OCI-LY7 (cell line): ENCODE measurements at regions of chr19 and their contacts with region 1.

Region 1: GRCh38 chr19:29735800-29736199 is 20.7 kb upstream of the C19orf12 start:
- DNase-seq: no peak
- H3K4me3 ChIP-seq: no peak overlapping the region
- H3K27ac ChIP-seq: no peak overlapping the region
- H3K4me1 ChIP-seq: no peaks in the 10 kb centered on the region
- CTCF ChIP-seq: no peak

Region 2: DNA sequence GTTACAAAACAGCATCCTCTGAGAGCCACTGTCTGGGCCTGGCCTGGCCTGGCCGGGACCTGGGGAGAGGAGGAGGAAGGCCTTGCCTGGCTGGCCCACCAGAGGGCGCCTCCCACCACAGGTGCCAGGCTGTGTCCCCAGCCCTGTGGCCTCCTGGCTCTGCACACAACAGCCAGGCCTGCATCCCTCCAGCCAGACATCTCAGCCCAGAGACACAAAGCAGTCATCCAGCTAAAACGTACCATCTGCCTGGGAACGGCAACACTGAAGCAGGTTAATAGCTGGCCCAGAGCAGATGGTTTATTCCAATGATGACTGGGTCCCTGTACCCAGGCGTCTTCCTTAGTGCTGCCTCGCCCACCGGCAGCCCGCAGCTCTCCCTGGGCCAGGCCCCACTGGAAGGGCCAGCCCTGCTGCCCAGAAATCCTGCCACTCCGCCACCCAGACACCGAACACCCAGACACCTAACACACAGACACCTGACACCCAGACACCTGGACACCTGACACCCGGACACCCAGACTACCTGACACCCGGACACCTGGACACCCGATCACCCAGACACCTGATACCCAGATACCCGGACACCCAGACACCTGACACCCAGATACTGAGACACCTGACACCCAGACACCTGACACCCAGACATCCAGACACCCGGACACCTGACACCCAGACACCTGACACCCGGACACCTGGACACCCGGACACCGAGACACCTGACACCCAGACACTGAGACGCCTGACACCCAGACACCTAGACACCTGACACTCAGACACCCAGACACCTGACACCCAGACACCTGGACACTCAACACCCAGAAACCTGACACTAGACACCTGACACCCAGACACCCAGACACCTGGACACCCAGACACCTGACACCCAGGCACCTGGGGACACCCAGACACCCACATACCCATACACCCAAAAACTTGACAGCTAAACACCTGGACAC is 40.9 kb before region 1 on chr19:
- CTCF ChIA-PET with region 1: no interaction called
- POLR2A ChIA-PET with region 1: no interaction called
- intact Hi-C with region 1: no loop called
- DNase-seq: peak; percentile 60
- H3K4me3 ChIP-seq: no peak overlapping the region
- H3K27ac ChIP-seq: no peak overlapping the region
- H3K4me1 ChIP-seq: peaks cover 6% of the 10 kb centered on the region
- CTCF ChIP-seq: peak; percentile 84

Region 3: GRCh38 chr19:29858000-29858596 is 122.3 kb after region 1 on chr19:
- CTCF ChIA-PET with region 1: no interaction called
- POLR2A ChIA-PET with region 1: no interaction called
- intact Hi-C with region 1: loop called (anchors 5 kb)
- DNase-seq: peak; percentile 55
- H3K4me3 ChIP-seq: no peak overlapping the region
- H3K27ac ChIP-seq: no peak overlapping the region
- H3K4me1 ChIP-seq: no peaks in the 10 kb centered on the region
- CTCF ChIP-seq: peak; percentile 82